ENCODE measurements at regions of chr4 and their contacts with region 1.

Region 1: DNA sequence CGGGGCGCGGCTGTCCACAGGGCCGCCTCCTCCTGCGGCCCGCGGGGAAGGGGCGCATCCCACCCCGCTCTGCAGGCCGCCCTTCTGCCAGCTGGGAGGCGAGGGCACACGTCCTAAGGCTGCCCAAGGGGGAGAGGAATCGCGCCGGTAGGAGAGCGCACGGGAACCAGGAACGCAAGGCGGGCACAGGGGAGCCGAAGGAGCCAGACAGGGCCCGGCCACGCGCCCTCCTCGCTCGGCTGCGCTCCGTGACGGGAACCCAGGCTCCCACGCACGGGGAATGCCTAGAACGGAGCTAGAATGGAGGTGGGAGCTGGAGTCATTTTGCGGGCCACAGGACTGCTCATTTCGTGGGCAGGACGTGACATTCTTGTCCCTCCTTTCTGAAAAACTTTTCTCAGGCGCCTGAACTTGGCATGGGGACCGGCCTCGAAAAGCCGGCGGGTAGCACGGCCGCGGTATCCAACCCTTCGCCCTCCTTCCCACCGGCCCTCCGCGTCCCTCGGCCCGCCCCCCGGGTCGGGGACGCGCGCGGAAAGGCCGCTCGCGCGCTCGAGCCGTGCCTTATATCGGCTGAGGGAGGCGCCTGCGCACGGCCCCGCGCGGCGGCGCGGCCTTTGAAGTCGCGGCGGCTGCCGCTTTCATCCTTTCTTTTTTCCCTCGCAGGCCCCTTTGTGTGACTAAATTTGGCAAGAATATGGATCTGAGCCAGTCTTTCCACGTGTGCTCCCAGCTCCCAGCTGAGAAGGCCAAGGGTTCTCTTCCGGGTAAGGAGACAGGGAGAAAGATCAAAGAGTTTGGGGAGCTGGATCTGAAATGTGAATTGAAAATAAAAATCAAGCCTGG is 4.2 kb upstream of the LEF1 start:
- DNase-seq: peak; percentile 63 to 71 (median 69)
- H3K4me3 ChIP-seq: peak overlapping the region; percentile 61 to 79
- H3K4me3 Mint-ChIP-seq: peak overlapping the region; percentile 89 to 96 (median 90)
- H3K27ac ChIP-seq: peak overlapping the region; percentile 50
- H3K27ac Mint-ChIP-seq: peak overlapping the region; percentile 47 to 94 (median 81)
- H3K4me1 ChIP-seq: peaks cover 43% of the 10 kb centered on the region
- H3K4me1 Mint-ChIP-seq: peaks cover 28 to 50% (median 37%) of the 10 kb centered on the region in 4 donors
- H3K27me3 ChIP-seq: peaks cover 14% of the 10 kb centered on the region
- H3K27me3 Mint-ChIP-seq: peaks cover 17 to 25% of the 10 kb centered on the region in 2 donors

Region 2: GRCh38 chr4:108072300-108072699 is 100.7 kb before region 1 on chr4:
- CTCF ChIA-PET with region 1: interaction called, 4 read pairs
- POLR2A ChIA-PET with region 1: interaction called, 14 read pairs
- intact Hi-C with region 1: no loop called
- DNase-seq: peak; percentile 58 to 87 (median 69)
- H3K4me3 ChIP-seq: no peak overlapping the region
- H3K4me3 Mint-ChIP-seq: peak overlapping the region in 7 of 8 donors; percentile 57 to 83 (median 78)
- H3K27ac ChIP-seq: peak overlapping the region; percentile 53
- H3K27ac Mint-ChIP-seq: peak overlapping the region; percentile 79 to 95 (median 94)
- H3K4me1 ChIP-seq: peaks cover 58% of the 10 kb centered on the region
- H3K4me1 Mint-ChIP-seq: peaks cover 36 to 74% (median 59%) of the 10 kb centered on the region in 4 donors
- H3K27me3 ChIP-seq: no peaks in the 10 kb centered on the region
- H3K27me3 Mint-ChIP-seq: no peaks in the 10 kb centered on the region

Region 3: DNA sequence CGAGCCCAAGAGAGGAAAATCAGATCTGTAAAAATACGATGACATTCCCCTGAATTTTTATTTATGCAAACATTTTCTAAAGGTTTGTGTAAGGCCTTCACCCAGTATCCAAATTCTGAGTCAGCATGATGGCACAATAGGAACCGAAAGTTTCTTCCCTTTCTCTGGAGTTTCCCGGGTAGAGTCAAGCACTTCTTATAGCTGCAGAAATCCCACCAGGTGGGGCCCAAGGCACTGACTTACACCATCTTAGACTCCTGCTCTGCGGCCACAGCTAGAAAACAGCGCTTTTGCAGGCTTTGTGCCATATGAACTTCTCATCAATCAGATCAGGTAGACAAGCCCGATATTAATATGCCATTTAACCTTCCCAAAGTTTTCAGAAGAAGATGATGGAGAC is 17.6 kb before region 1 on chr4:
- CTCF ChIA-PET with region 1: interaction called, 6 read pairs
- POLR2A ChIA-PET with region 1: interaction called, 122 read pairs
- intact Hi-C with region 1: no loop called
- DNase-seq: peak in 1 of 5 donors; percentile 56
- H3K4me3 ChIP-seq: no peak overlapping the region
- H3K4me3 Mint-ChIP-seq: peak overlapping the region; percentile 26 to 84 (median 72)
- H3K27ac ChIP-seq: no peak overlapping the region
- H3K27ac Mint-ChIP-seq: peak overlapping the region; percentile 33 to 89 (median 52)
- H3K4me1 ChIP-seq: peaks cover 100% of the 10 kb centered on the region
- H3K4me1 Mint-ChIP-seq: peaks cover 54 to 80% (median 69%) of the 10 kb centered on the region in 4 donors
- H3K27me3 ChIP-seq: no peaks in the 10 kb centered on the region
- H3K27me3 Mint-ChIP-seq: no peaks in the 10 kb centered on the region

Region 4: GRCh38 chr4:108224611-108225053 is 51.7 kb after region 1 on chr4:
- CTCF ChIA-PET with region 1: no interaction called
- POLR2A ChIA-PET with region 1: no interaction called
- intact Hi-C with region 1: no loop called
- DNase-seq: no peak
- H3K4me3 ChIP-seq: no peak overlapping the region
- H3K4me3 Mint-ChIP-seq: no peak overlapping the region
- H3K27ac ChIP-seq: no peak overlapping the region
- H3K27ac Mint-ChIP-seq: no peak overlapping the region
- H3K4me1 ChIP-seq: no peaks in the 10 kb centered on the region
- H3K4me1 Mint-ChIP-seq: peaks cover 0 to 3% (median 2%) of the 10 kb centered on the region in 4 donors
- H3K27me3 ChIP-seq: no peaks in the 10 kb centered on the region
- H3K27me3 Mint-ChIP-seq: no peaks in the 10 kb centered on the region

Region 5: DNA sequence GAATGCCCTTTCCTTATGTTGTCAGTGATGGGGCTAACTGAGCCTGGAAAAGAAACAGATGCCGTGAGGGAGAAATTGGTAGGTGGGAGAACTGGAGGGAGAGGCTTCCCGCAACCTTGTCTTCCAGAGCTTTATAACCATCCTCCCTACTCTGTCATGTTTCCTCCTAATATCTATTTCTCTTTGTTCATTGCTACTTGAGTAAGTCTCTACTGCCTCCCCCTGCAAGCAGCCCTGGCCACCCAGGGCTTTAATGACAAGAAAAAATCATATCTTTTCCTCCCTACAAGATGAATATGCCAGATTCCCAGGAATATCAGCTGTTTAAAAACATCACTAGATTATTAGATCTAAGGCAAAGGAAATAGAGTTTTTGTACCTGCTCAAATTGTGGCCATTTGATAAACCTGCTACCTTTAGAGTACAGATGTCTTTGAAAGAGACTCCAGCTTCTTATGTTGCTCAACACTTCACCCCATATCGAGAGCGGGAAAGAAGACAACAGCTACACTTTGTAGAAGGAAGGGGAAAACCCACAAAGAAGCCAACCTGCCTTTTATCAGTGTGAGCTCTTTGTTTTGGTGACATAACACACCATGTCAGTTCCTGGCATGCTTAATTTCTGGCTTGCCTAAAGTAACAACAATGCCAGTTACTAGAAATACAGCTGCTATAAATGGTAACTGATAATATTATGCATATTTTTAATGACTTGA is 182.4 kb after region 1 on chr4:
- CTCF ChIA-PET with region 1: interaction called, 3 read pairs
- POLR2A ChIA-PET with region 1: interaction called, 20 read pairs
- intact Hi-C with region 1: loop called (anchors 5 kb)
- DNase-seq: peak; percentile 64 to 81 (median 70)
- H3K4me3 ChIP-seq: no peak overlapping the region
- H3K4me3 Mint-ChIP-seq: peak overlapping the region; percentile 0 to 89 (median 60)
- H3K27ac ChIP-seq: peak overlapping the region; percentile 48
- H3K27ac Mint-ChIP-seq: peak overlapping the region; percentile 79 to 96 (median 91)
- H3K4me1 ChIP-seq: peaks cover 61% of the 10 kb centered on the region
- H3K4me1 Mint-ChIP-seq: peaks cover 38 to 61% (median 60%) of the 10 kb centered on the region in 4 donors
- H3K27me3 ChIP-seq: no peaks in the 10 kb centered on the region
- H3K27me3 Mint-ChIP-seq: no peaks in the 10 kb centered on the region

Region 6: DNA sequence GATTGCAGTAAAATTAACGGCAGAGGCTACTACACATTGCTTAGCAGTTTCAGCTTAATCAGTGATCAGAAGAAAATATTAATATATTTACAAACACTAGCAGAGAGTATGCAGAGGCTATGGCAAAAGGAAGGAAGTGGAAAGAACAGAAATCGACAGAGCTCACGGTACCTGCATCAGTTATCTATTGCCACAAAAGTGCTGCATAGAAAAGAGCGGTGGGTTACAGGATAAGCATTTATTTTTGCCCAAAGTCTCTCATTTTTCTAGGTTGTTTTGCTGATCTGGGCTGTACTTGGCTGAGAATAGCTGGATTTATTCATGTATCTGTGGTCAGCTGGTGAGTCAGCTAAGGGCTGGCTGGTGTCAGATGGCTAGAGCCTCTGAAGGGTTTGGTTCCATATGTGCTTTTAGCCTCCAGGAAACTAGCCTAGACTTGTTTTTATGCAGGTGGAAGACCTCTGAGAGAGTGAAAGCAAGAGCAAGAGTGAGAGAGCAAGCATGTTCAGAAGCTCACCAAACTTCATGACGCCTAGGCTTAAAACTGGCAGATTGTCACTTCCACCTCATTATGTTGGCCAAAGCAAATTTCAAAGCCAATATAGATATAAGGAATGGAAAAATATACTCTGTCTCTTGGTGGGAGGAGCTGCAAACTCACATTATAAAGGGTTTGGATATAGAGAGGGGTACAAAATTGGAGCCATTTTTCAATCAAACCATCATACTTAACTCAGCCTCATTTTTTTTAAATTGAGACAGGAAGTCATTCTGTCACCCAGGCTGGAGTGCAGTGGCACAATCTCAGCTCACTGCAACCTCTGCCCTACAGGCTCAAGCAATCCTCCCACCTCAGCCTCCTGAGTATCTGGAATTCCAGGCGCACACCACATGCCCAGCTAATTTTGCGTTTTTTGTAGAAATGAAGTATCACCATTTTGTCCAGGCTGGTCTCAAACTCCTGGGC is 294.2 kb after region 1 on chr4:
- CTCF ChIA-PET with region 1: interaction called, 3 read pairs
- POLR2A ChIA-PET with region 1: interaction called, 6 read pairs
- intact Hi-C with region 1: loop called (anchors 2 kb)
- DNase-seq: peak in 4 of 5 donors; percentile 20 to 33 (median 21)
- H3K4me3 ChIP-seq: no peak overlapping the region
- H3K4me3 Mint-ChIP-seq: peak overlapping the region; percentile 57 to 92 (median 74)
- H3K27ac ChIP-seq: no peak overlapping the region
- H3K27ac Mint-ChIP-seq: peak overlapping the region; percentile 70 to 92 (median 79)
- H3K4me1 ChIP-seq: peaks cover 32% of the 10 kb centered on the region
- H3K4me1 Mint-ChIP-seq: peaks cover 21 to 40% (median 32%) of the 10 kb centered on the region in 4 donors
- H3K27me3 ChIP-seq: no peaks in the 10 kb centered on the region
- H3K27me3 Mint-ChIP-seq: no peaks in the 10 kb centered on the region

Region 7: GRCh38 chr4:108540536-108540935 is 367.6 kb after region 1 on chr4:
- CTCF ChIA-PET with region 1: no interaction called
- POLR2A ChIA-PET with region 1: no interaction called
- intact Hi-C with region 1: no loop called
- DNase-seq: peak in 1 of 5 donors; percentile 6
- H3K4me3 ChIP-seq: no peak overlapping the region
- H3K4me3 Mint-ChIP-seq: peak overlapping the region in 1 of 8 donors; percentile 4
- H3K27ac ChIP-seq: no peak overlapping the region
- H3K27ac Mint-ChIP-seq: peak overlapping the region in 2 of 7 donors; percentile 13 to 83
- H3K4me1 ChIP-seq: peaks cover 13% of the 10 kb centered on the region
- H3K4me1 Mint-ChIP-seq: peaks cover 9 to 30% (median 23%) of the 10 kb centered on the region in 4 donors
- H3K27me3 ChIP-seq: no peaks in the 10 kb centered on the region
- H3K27me3 Mint-ChIP-seq: no peaks in the 10 kb centered on the region

Measured in CD4-positive, alpha-beta memory T cell (primary cell).